ENCODE measurements at regions of chr2 and their contacts with region 1.

Region 1: DNA sequence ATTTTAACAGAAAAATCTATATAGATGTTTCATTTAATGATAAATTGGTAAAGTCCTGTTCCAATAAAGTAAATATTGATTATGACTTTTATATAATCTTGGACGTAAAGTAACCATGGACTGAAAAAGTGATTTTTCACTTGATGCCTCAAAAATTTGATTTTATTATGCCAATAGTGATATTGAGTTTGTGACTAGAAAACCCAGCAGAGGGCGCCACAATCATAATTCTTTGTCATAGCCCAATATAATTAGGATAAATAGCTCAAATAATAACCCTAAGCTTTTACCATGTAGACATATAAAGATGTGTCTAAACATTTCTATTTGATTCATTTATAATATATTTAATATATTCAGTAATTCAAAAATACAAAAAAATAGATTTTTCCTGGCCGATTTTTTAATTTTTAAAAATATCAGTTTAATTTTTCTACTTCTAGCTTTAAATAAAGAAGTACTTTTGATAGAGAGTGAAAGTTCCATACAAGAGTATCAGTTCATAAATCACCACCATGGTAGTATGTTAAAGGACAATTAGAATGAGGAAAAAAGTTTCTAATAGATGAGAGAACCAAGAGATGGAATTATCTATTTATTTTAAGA is 30.7 kb downstream of the CAMKMT start:
- DNase-seq: peak; percentile 72
- H3K4me3 Mint-ChIP-seq: no peak overlapping the region
- H3K27ac Mint-ChIP-seq: no peak overlapping the region
- H3K4me1 Mint-ChIP-seq: peaks cover 5% of the 10 kb centered on the region
- H3K27me3 Mint-ChIP-seq: no peaks in the 10 kb centered on the region

Region 2: DNA sequence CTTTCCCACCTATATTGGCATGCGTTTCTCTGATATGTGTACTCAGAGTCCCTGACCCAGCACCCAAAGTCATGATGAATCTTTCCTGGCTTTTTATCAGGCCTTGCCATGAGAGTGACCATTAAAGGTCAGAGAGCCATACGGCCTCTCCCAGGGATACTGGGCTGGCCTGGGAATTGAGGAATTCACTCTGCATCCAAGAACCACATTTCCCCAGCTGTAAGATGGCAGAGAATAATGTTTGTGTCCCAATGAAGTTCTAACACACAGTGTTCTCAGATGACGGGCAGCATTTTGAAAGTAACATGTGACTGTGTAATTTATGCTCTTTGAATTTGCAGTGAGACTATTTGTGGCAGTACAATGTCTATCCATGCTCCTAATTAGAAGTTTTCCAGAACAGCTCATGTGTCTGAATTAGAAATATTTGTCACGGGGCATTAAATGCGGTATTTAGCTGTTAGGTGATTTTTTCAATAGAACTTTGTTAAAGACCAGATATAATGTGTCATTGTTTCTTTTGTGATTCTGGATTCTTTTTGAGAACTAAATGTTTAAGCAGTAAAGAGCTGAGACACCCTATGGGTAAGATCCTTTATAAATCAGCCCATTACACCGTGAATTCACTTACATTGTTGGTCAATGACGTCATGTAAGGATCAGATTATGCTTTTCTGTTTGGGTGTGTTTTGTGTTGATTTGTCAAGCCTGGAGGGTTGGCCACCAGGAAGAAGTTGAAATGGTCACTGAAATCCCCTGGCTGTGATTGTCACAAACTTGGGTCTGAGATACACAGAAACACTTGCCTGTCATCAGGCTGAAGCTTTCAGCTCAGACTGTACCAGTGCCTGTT is 124.4 kb before region 1 on chr2:
- CTCF ChIA-PET with region 1: no interaction called
- intact Hi-C with region 1: no loop called
- DNase-seq: no peak
- H3K4me3 Mint-ChIP-seq: no peak overlapping the region
- H3K27ac Mint-ChIP-seq: no peak overlapping the region
- H3K4me1 Mint-ChIP-seq: no peaks in the 10 kb centered on the region
- H3K27me3 Mint-ChIP-seq: no peaks in the 10 kb centered on the region

Region 3: DNA sequence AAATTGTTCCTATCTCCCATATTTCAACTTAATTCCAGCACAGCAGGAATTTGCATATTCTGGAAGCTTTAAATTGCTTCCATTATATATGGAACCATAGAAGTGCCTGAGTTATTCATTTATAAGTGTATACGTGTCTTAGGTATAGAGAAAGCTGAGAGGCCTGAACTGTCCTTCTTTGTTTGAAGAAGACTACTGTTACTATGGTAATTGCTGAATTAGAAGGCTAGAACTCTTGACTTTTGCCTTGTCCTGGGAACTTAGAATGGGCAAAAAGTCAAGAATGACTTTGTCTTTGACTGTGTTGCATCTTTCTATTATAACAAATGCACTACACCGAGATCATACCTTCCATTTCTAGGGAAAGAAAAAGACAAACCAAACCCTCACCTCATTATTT is 15.0 kb before region 1 on chr2:
- CTCF ChIA-PET with region 1: interaction called, 10 read pairs
- intact Hi-C with region 1: no loop called
- DNase-seq: no peak
- H3K4me3 Mint-ChIP-seq: no peak overlapping the region
- H3K27ac Mint-ChIP-seq: no peak overlapping the region
- H3K4me1 Mint-ChIP-seq: peaks cover 5% of the 10 kb centered on the region
- H3K27me3 Mint-ChIP-seq: no peaks in the 10 kb centered on the region

Region 4: DNA sequence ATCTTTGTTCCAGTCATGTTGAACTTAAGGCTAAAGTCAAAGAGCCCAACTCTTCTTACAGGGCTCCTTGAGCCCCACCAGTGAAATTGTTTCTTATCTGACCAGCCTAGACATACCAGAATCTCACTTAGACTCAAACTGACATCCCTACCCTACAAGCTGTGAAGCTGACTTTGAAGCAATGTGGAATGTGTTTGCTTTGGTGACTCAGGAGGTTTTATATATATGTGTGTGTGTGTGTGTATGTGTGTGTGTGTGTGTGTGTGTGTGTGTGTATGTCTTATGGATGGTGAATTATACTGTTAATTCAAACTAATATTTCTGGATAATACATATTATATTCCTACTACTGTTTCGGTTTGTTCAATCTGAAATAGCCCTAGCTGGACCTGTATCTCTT is 36.6 kb after region 1 on chr2:
- CTCF ChIA-PET with region 1: no interaction called
- intact Hi-C with region 1: no loop called
- DNase-seq: no peak
- H3K4me3 Mint-ChIP-seq: no peak overlapping the region
- H3K27ac Mint-ChIP-seq: no peak overlapping the region
- H3K4me1 Mint-ChIP-seq: no peaks in the 10 kb centered on the region
- H3K27me3 Mint-ChIP-seq: no peaks in the 10 kb centered on the region

Region 5: DNA sequence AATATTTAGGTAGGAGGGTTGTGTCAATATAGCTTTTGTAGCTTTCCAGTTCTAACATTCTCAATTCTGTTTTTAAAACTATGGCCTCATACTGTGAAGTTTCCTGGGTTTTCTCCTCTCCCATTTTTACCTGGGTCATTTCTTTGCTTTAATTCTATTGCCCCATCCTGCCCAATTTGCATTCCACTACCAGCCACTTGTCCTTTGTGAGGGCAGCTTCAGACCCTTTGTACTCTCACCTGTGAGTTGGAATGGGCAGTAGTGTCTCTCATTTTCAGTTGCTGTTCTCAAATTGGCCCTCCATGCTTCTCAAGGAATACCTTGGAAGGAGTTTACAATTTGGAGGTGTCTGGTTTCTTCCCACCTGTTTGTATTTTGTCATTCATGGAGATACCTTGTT is 77.7 kb after region 1 on chr2:
- CTCF ChIA-PET with region 1: no interaction called
- intact Hi-C with region 1: no loop called
- DNase-seq: no peak
- H3K4me3 Mint-ChIP-seq: no peak overlapping the region
- H3K27ac Mint-ChIP-seq: no peak overlapping the region
- H3K4me1 Mint-ChIP-seq: no peaks in the 10 kb centered on the region
- H3K27me3 Mint-ChIP-seq: no peaks in the 10 kb centered on the region

Measured in activated naive CD4-positive, alpha-beta T cell treated with anti-CD3 and anti-CD28 coated beads for 36 hours (primary cell).